Activated T-helper 2 cell treated with anti-CD3 and anti-CD28 coated beads, Interferon-gamma antibody, Interleukin-2, Interleukin-4, amounts not matched to agents 10 μg/mL and 5 μg/mL and 100 μg/mL, durations not matched to agents 14 hours and 24 hours and 36 hours (primary cell): ENCODE measurements at regions of chr11 and their contacts with region 1.

Region 1: DNA sequence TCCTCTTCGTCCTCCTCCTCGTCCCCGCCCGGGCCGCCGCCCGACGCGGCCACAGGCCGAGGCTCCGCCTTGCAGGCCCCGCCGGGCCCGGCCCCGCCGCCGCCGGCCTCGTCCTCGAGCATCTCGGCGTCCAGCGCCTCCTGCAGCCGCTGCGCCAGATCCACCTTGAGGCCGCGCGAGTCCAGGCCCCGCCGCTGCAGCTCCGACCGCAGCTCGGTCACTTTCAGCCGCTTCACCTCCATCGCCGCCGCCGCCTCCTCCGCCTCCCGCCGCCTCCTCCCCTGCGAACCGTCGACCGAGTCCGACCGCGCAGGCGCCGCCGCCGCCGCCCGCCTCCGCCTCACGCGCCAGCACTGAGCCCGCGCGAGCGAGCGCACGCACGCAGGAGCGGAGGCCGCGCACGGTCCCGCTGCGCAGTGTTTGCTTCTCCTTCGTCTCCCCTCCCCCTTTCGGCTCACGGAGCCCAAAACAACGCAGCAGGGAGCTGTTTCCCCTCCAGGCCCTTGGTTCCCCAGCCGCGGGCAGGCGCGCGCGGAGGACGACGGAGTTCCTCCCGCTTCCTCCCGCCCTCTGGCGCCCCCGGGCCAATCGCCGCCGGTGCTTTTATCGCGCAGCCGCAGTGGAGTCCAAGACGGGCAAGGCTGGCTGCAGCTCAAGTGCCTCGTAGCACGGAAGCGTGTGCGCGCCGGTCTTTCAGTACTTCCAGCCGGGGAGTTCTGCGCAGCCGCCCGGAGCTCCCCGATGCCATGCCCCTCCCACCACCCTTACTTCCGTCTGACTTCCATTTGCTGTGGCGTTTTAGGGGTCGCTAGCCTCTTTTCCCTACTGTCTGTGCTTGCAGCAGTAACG is at the start of gene HNRNPUL2:
- DNase-seq: peak; percentile 100
- H3K4me3 Mint-ChIP-seq: peak within 1 kb of the TSS; percentile 99
- H3K27ac Mint-ChIP-seq: peak within 1 kb of the TSS; percentile 96
- H3K4me1 Mint-ChIP-seq: peaks cover 31% of the 10 kb centered on the region
- H3K27me3 Mint-ChIP-seq: no peaks in the 10 kb centered on the region
- total RNA-seq, gene HNRNPUL2: 62.6 and 63.5 TPM in 2 replicates

Region 2: GRCh38 chr11:62444236-62444833 is 282.8 kb before region 1 on chr11:
- intact Hi-C with region 1: no loop called
- DNase-seq: peak; percentile 20
- H3K4me3 Mint-ChIP-seq: peak overlapping the region; percentile 69
- H3K27ac Mint-ChIP-seq: peak overlapping the region; percentile 29
- H3K4me1 Mint-ChIP-seq: peaks cover 12% of the 10 kb centered on the region
- H3K27me3 Mint-ChIP-seq: peaks cover 16% of the 10 kb centered on the region

Region 3: GRCh38 chr11:62601394-62602140 is 125.6 kb before region 1 on chr11 and contains the start of gene MTA2:
- intact Hi-C with region 1: loop called (anchors 5 kb)
- DNase-seq: peak; percentile 100
- H3K4me3 Mint-ChIP-seq: peak within 1 kb of the TSS; percentile 91
- H3K27ac Mint-ChIP-seq: peak within 1 kb of the TSS; percentile 95
- H3K4me1 Mint-ChIP-seq: peaks cover 41% of the 10 kb centered on the region
- H3K27me3 Mint-ChIP-seq: no peaks in the 10 kb centered on the region
- total RNA-seq, gene MTA2: 201 and 215 TPM in 2 replicates

Region 4: DNA sequence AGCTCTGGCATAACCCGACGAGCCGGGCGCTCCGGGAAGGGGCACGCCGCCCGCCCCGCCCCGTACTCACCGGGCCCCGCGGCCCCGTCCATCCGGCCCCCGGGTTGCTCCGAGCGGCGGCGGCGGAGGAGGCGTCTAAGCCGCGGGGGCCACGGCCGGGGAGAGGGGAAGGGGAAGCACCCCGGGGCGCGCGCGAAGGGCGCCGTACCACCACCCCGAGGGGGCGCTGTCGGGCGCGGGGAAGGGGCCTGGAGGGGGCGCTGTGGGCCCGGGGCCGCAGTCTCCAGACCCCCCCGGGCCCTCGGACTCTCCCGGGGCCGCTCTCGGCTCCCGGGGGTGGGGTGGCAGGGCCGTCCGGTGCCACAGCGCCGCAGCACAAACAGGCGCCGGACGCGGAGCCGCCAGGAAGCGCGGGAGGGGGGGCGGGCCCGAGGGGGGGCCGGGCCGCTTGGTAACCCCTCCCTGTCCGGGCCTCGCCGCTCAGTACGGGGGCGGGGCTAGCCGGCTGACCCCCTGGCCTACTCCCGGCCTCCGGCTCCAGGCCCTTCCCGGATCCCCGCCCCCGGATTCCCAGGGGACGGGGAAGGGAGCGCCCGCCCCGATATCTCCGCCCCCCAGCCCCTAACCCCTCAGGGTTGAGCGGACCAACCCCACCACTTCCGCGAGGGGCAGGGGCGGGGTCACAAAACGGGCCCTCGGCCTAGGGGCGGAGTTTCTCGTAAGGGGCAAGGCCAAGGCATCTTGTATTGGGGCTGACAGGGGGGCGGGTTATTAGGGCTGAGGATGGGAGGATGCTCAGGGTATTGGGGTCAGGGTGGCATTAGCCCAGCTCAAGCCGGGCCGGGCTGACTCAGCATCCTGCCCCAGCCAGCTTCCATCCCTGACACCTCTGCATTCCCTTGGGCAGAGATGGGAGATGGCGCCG is 114.5 kb before region 1 on chr11 and contains the starts of genes EML3 and ROM1:
- intact Hi-C with region 1: no loop called
- DNase-seq: peak; percentile 86
- H3K4me3 Mint-ChIP-seq: peak within 1 kb of the TSS; percentile 99
- H3K27ac Mint-ChIP-seq: peak within 1 kb of the TSS; percentile 95
- H3K4me1 Mint-ChIP-seq: peaks cover 34% of the 10 kb centered on the region
- H3K27me3 Mint-ChIP-seq: no peaks in the 10 kb centered on the region
- total RNA-seq, gene EML3: 144 and 146 TPM in 2 replicates
- total RNA-seq, gene ROM1: 1.4 and 2.8 TPM in 2 replicates

Region 5: GRCh38 chr11:62671575-62672389 is 55.4 kb before region 1 on chr11 and contains the starts of genes LBHD1 and UQCC3:
- intact Hi-C with region 1: loop called (anchors 2 kb)
- DNase-seq: peak; percentile 67
- H3K4me3 Mint-ChIP-seq: peak within 1 kb of the TSS; percentile 97
- H3K27ac Mint-ChIP-seq: peak within 1 kb of the TSS; percentile 96
- H3K4me1 Mint-ChIP-seq: peaks cover 31% of the 10 kb centered on the region
- H3K27me3 Mint-ChIP-seq: no peaks in the 10 kb centered on the region
- total RNA-seq, gene LBHD1: 21.4 and 21.7 TPM in 2 replicates
- total RNA-seq, gene UQCC3: 8.0 and 9.5 TPM in 2 replicates

Region 6: GRCh38 chr11:62737196-62737595 is 10.1 kb after region 1 on chr11:
- intact Hi-C with region 1: no loop called
- DNase-seq: no peak
- H3K4me3 Mint-ChIP-seq: no peak overlapping the region
- H3K27ac Mint-ChIP-seq: no peak overlapping the region
- H3K4me1 Mint-ChIP-seq: peaks cover 5% of the 10 kb centered on the region
- H3K27me3 Mint-ChIP-seq: no peaks in the 10 kb centered on the region

Region 7: GRCh38 chr11:62753736-62754603 is 26.8 kb after region 1 on chr11 and contains the start of gene ZBTB3:
- intact Hi-C with region 1: loop called (anchors 2 kb)
- DNase-seq: peak; percentile 98
- H3K4me3 Mint-ChIP-seq: peak within 1 kb of the TSS; percentile 85
- H3K27ac Mint-ChIP-seq: peak within 1 kb of the TSS; percentile 93
- H3K4me1 Mint-ChIP-seq: peaks cover 5% of the 10 kb centered on the region
- H3K27me3 Mint-ChIP-seq: no peaks in the 10 kb centered on the region
- total RNA-seq, gene ZBTB3: 7.3 and 9.3 TPM in 2 replicates

Region 8: GRCh38 chr11:62787005-62787759 is 60.0 kb after region 1 on chr11 and contains the start of gene TMEM179B:
- intact Hi-C with region 1: loop called (anchors 1 kb)
- DNase-seq: peak; percentile 95
- H3K4me3 Mint-ChIP-seq: peak within 1 kb of the TSS; percentile 90
- H3K27ac Mint-ChIP-seq: peak within 1 kb of the TSS; percentile 91
- H3K4me1 Mint-ChIP-seq: peaks cover 39% of the 10 kb centered on the region
- H3K27me3 Mint-ChIP-seq: no peaks in the 10 kb centered on the region
- total RNA-seq, gene TMEM179B: 34.6 and 35.9 TPM in 2 replicates

Region 9: GRCh38 chr11:62855571-62856332 is 128.6 kb after region 1 on chr11:
- intact Hi-C with region 1: loop called (anchors 1 kb)
- DNase-seq: peak; percentile 98
- H3K4me3 Mint-ChIP-seq: peak overlapping the region; percentile 96
- H3K27ac Mint-ChIP-seq: peak overlapping the region; percentile 96
- H3K4me1 Mint-ChIP-seq: peaks cover 45% of the 10 kb centered on the region
- H3K27me3 Mint-ChIP-seq: no peaks in the 10 kb centered on the region